ENCODE measurements at regions of chr1 and their contacts with region 1.

Region 1: DNA sequence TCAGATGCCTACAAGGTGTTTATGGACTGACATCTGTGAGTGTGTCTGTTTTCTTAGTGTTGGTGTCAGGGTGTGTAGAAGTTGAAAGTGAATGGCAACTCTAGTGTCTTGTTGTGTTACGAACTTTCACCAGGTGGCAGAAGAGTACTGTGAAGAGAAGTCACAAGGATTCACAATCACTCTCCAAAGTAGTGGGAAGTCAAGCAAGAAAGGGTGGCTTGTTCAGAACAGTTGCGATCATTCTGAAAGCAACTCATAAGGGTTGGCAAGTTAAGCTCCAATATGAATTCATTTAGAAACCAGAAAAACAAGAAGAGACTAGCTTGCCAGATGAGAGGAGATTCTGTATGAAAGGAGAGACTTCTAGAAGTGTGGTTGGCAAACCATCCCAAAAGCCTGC is 86.1 kb downstream of the FASLG start:
- DNase-seq: peak; percentile 99
- ATAC-seq: peak; percentile 27
- H3K4me3 ChIP-seq: no peak overlapping the region
- H3K27ac ChIP-seq: no peak overlapping the region
- H3K4me1 ChIP-seq: peaks cover 34% of the 10 kb centered on the region
- H3K27me3 ChIP-seq: no peaks in the 10 kb centered on the region
- CTCF ChIP-seq: peak; percentile 100

Region 2: GRCh38 chr1:172863031-172863430 is 118.0 kb after region 1 on chr1:
- CTCF ChIA-PET with region 1: no interaction called
- POLR2A ChIA-PET with region 1: no interaction called
- intact Hi-C with region 1: loop called (anchors 1 kb)
- DNase-seq: peak; percentile 30
- ATAC-seq: no peak
- H3K4me3 ChIP-seq: no peak overlapping the region
- H3K27ac ChIP-seq: no peak overlapping the region
- H3K4me1 ChIP-seq: peaks cover 9% of the 10 kb centered on the region
- H3K27me3 ChIP-seq: no peaks in the 10 kb centered on the region
- CTCF ChIP-seq: no peak

Region 3: DNA sequence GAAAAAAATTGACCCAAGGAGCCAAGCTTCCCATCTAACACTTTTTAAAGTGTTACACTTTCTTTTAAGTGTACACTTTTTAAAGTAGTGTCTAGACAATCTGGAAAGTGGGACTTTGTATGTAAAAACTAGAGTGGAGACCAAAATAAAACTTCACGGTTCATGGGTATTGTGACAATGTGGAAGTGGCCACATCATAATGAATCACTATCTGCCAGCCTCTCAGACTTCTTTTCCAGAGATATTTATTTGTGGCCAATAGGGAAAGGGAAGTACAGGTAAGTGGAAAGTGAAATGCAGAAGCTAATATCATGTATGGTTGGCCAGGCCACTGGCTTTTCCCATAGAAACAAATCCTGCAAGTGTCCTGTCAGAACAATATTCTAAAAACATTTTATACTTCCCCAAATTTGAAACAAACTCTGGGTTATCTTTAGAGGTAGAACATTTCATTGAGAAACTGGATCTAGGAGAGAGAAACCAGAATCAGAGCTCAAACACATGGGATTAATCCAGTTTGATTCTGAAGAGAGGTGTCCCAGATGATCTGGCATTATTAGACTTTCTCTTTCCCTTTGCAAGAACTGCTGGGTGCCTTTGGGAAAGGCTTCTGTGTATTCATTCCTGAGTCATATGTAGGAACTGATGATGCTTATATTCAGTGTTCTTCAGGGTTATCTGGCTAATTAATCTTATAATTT is 303.8 kb after region 1 on chr1:
- CTCF ChIA-PET with region 1: no interaction called
- POLR2A ChIA-PET with region 1: no interaction called
- intact Hi-C with region 1: loop called (anchors 2 kb)
- DNase-seq: peak; percentile 98
- ATAC-seq: peak; percentile 85
- H3K4me3 ChIP-seq: no peak overlapping the region
- H3K27ac ChIP-seq: peak overlapping the region; percentile 51
- H3K4me1 ChIP-seq: peaks cover 55% of the 10 kb centered on the region
- H3K27me3 ChIP-seq: no peaks in the 10 kb centered on the region
- CTCF ChIP-seq: no peak

Region 4: GRCh38 chr1:173255214-173255813 is 510.3 kb after region 1 on chr1:
- CTCF ChIA-PET with region 1: interaction called, 4 read pairs
- POLR2A ChIA-PET with region 1: no interaction called
- intact Hi-C with region 1: loop called (anchors 1 kb)
- DNase-seq: peak; percentile 90
- ATAC-seq: peak; percentile 90
- H3K4me3 ChIP-seq: no peak overlapping the region
- H3K27ac ChIP-seq: no peak overlapping the region
- H3K4me1 ChIP-seq: no peaks in the 10 kb centered on the region
- H3K27me3 ChIP-seq: no peaks in the 10 kb centered on the region
- CTCF ChIP-seq: peak; percentile 100

Region 5: DNA sequence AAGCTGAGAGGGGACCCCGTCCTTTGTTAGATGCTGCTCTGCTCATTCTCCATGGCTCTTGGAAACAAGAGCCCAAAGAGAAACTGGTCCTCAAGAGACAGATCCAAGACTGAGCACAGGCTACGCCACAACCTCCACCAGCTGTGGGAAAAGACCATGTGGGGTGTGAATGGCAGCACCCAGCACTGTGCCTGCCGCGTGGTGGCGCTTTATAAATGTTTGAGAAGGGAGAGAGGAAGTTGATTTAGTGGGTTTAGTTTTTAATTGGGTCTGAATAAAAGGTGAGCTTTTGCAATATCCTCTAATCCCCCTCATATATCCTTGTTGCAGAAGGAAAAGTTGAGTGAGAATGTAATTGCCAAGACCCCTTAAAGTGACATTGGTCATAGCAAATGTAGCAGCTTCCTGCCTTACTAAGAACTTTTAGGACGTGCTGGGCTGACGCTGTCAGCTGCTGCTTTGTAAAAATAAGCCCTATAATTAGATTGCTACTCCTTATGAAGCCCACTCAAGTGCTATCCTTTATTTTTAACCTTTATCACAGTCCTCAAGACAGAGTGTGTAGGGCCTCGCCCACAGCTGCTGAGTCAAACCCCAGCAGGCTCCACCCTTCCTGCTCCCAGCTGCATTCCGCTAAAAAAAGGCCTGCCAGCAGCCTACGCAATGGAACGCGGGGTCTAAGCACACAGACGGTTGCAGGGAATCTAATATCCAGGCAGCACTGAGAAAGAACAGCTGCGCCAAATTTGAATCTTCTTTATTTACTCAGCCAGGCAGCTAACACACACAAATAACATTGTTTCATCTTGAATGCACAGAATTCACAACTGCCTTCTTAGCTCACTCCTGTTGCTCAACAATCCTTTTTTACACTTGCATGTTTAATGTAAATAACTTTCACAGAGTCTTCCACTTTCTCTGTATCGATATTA is 684.7 kb after region 1 on chr1:
- CTCF ChIA-PET with region 1: interaction called, 4 read pairs
- POLR2A ChIA-PET with region 1: interaction called, 5 read pairs
- intact Hi-C with region 1: loop called (anchors 1 kb)
- DNase-seq: peak; percentile 100
- ATAC-seq: peak; percentile 83
- H3K4me3 ChIP-seq: peak overlapping the region; percentile 47
- H3K27ac ChIP-seq: peak overlapping the region; percentile 71
- H3K4me1 ChIP-seq: peaks cover 71% of the 10 kb centered on the region
- H3K27me3 ChIP-seq: no peaks in the 10 kb centered on the region
- CTCF ChIP-seq: peak; percentile 96

Region 6: DNA sequence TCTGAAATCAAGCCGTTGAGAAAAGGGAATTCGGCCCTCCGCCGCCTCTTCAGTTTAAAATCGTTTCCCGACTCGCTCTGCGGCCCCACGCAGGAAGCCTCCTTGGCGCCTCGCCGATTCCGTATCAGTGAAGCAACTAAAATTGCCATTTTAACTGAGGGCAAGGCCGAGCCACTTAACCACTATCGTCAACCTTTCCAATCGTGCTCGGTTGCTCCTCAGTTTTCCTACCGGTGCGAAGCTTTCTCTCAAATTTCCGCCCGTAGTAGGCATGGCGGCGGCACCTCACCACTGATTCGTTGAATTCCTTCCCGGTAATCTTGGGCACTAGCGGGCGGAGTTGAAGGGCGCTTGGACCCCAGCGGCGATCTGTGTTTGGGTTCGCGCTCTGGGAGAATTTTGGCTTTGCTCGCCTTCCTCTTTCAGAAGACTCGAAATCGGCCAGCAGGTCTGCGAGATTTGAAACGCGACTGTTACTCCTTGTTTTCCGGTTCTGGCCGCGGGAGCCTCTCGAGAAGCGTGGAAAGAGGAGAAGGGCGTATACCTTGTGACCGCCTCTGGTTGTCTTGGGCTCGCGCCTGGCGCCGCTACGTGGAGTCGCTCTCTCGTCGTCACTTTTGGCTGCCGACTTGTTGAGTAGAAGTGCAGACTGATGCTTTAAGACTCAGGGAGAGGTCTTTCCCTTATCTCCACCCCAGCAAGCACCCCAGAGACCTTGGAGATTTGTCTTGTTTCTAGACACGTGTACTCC is 1079.5 kb after region 1 on chr1 and contains the starts of genes CENPL and DARS2:
- CTCF ChIA-PET with region 1: no interaction called
- POLR2A ChIA-PET with region 1: no interaction called
- intact Hi-C with region 1: loop called (anchors 1 kb)
- DNase-seq: peak; percentile 100
- ATAC-seq: peak; percentile 88
- H3K4me3 ChIP-seq: peak within 1 kb of the TSS; percentile 72
- H3K27ac ChIP-seq: peak within 1 kb of the TSS; percentile 81
- H3K4me1 ChIP-seq: peaks cover 56% of the 10 kb centered on the region
- H3K27me3 ChIP-seq: no peaks in the 10 kb centered on the region
- CTCF ChIP-seq: no peak
- total RNA-seq, gene CENPL: 92.8 and 108 TPM in 2 replicates
- total RNA-seq, gene DARS2: 71.8 and 77.3 TPM in 2 replicates

Measured in PC-3 (cell line).